AG04449 (cell line): ENCODE measurements at regions of chr6 and their contacts with region 1.

Region 1: DNA sequence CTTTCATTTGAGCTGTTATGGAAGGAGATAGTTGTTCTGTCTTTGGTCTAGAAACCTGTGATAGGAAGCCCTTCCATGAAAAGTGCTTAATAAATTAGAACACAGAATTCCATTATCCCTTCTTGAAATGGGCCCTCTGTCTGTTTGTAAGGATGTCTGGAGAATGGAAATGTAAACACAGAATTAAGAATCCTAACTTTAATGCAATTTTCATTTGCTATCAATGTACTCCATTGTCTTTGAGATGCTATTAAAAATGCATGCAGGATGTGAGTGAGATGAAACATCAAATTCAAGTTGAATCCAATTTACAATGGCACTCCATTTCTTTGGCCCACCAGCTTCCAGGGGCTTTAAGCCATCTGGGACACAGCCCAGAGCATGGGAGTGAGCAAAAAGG is 13.9 kb upstream of the AARS2 start:
- DNase-seq: no peak
- H3K4me3 ChIP-seq: no peak overlapping the region
- CTCF ChIP-seq: no peak

Region 2: DNA sequence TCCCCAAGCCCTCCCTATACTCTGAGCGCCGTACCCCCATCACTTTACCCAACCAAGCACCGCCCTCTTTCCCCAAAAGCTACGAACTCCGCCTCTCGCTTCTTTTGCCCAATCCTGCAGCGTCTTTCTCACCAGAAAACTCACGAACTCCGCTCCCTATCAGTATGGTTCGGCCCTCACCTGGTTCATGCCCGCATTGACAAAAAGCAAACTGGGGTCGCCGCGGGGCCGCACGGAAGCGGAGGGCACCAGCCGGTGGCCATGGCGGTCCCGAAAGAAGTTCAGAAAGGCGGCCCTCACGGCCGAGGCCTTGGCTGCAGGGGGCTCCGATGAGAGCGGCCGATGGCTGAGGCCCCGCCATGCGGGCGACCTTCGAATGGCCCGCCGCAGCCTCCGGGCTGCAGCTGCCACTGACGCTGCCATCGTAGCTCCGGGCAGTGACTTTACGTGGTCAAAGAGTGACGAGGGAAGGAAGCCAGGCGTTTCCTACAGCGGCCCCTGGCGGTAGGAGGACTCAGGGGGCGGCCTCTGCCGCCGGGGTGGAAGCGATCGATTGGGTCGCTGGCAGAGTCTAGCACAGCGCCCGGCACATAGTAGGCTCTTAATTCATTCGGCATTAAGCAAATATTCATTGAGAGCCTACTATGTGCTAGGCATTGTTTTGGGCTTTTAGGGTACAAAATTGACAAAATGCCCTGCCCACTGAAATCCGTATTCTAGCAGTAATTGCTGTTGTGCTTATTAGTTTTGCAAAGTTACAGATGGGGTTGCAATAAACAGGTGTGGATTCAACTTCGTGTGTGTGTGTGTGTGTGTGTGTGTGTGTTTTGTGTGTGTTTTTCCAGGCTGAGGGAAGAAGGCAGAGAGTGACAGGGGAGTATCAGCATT is 14.0 kb before region 1 on chr6 and contains the start of gene AARS2:
- CTCF ChIA-PET with region 1: interaction called, 63 read pairs
- POLR2A ChIA-PET with region 1: no interaction called
- DNase-seq: peak; percentile 37
- H3K4me3 ChIP-seq: peak within 1 kb of the TSS; percentile 94
- CTCF ChIP-seq: peak; percentile 97

Region 3: DNA sequence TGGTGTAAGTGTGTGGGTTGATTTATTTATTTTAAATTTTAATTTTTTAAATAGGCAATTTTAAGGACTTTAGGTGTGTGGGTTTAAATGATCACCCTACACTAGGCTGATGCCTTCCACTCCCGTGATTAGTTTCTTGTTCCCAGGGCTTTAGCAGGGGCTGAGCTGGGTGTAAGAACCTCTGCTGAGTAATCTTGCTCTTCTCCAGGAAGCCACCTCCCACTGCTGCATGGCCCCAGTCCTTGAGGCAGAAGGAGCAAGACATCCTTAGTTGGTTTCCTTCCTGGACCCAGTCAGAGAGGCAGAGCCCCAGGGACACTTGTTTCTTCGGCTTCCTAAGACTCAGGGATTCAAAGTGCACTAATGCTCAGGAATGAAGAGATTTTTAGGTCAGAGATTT is 40.6 kb after region 1 on chr6:
- CTCF ChIA-PET with region 1: no interaction called
- POLR2A ChIA-PET with region 1: no interaction called
- DNase-seq: no peak
- H3K4me3 ChIP-seq: no peak overlapping the region
- CTCF ChIP-seq: no peak